Gastrocnemius medialis (tissue), 4 donors: ENCODE measurements at regions of chr16 and their contacts with region 1.

Region 1: DNA sequence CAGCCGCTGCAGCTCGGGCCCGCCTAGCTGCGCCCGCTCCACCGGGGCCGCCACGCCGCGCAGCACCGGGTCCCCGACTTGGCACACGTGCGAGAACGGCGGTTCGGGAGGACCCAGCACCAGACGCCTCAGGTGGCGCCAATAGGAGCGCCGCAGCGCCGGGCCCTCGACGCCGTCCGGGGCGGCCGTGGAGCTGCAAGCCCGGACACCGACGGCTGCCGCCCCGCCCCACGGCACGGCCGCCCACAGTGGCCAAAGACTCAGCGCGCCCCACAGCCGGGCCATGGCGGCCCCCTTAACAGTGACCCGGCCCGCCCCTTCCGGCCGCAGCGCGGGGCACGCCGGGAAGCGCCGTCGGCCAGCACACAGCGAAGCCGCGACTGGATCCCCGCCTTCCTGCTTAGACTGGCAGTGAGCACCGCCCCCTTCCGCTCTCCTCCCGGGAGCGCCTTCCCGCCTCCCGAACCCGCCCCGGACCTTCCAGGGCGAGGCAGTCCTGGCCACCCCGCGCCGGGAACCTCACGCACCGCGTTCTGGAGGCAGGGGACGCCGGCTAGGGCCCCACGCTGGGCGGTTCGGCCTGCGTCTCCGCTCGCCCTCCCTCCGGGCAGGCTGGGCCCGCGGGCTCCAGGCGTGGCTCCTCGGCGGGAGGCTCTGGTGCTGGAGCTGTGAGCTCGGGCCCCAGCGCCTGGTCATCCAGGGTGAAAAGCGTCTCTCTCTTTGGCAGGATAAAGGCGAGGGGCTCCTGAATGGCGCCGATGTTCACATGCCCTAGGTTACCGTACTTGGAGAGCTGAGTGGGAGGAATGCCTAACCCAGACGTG is at the start of gene PDF:
- DNase-seq: peak; percentile 89
- ATAC-seq: peak; percentile 86 to 93
- H3K4me3 ChIP-seq: peak within 1 kb of the TSS; percentile 73 to 100 (median 93)
- H3K27ac ChIP-seq: peak within 1 kb of the TSS; percentile 82 to 99 (median 95)
- H3K4me1 ChIP-seq: peaks cover 46 to 52% of the 10 kb centered on the region in 2 donors
- H3K27me3 ChIP-seq: no peaks in the 10 kb centered on the region
- CTCF ChIP-seq: peak in 1 of 5 experiments; percentile 22
- POLR2A ChIP-seq: peak; percentile 71 to 84
- total RNA-seq, gene PDF: 11.0 to 23.1 (median 16.8) TPM

Region 2: DNA sequence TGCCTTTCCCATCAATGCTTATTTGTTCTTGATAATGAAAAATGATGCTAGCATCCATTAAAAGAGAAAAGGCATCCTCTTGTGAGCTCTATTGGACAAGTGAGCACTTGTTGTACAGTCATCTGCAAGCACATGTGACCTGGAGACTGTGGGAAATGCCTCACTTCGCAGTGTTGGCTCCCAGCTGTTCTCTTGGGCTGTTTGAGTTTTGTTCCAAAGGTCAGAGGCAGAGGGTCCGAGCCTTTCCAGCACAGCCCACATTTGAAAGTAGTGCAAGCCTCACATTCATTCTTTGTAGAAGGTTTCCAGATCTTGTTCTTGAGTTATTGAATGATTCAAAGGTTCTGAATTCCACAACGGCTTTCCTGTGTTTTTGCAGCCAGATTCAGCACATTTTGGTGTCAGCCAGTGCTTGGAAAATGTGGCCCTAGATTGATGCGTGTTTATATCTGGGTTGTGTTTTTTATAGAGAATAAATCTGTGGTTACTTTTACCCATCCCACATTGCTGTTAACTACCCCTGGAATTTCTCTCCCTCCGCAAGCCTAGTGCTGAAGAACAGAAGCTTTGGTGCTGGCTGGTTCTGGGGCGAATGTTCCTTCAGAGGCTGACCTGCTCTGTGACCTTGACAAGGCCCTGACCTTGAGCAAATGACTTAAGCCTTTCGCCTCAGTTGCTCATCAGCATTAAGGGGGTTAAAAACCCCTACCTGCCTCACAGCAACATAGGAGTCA is 543.6 kb before region 1 on chr16:
- in situ Hi-C with region 1: no loop called
- intact Hi-C with region 1: no loop called
- DNase-seq: no peak
- ATAC-seq: no peak
- H3K4me3 ChIP-seq: no peak overlapping the region
- H3K27ac ChIP-seq: no peak overlapping the region
- H3K4me1 ChIP-seq: no peaks in the 10 kb centered on the region
- H3K27me3 ChIP-seq: no peaks in the 10 kb centered on the region
- CTCF ChIP-seq: no peak
- POLR2A ChIP-seq: no peak

Region 3: GRCh38 chr16:69310653-69311532 is 19.6 kb before region 1 on chr16 and contains the start of gene VPS4A:
- in situ Hi-C with region 1: no loop called
- intact Hi-C with region 1: loop called (anchors 1 kb)
- DNase-seq: peak; percentile 93 to 95
- ATAC-seq: peak; percentile 91 to 96
- H3K4me3 ChIP-seq: peak within 1 kb of the TSS; percentile 74 to 97 (median 76)
- H3K27ac ChIP-seq: peak within 1 kb of the TSS; percentile 81 to 95 (median 90)
- H3K4me1 ChIP-seq: peaks cover 15 to 19% of the 10 kb centered on the region in 2 donors
- H3K27me3 ChIP-seq: no peaks in the 10 kb centered on the region
- CTCF ChIP-seq: peak; percentile 90 to 99 (median 94)
- POLR2A ChIP-seq: peak; percentile 62 to 87
- total RNA-seq, gene VPS4A: 53.3 to 112 (median 70.1) TPM